ENCODE measurements at regions of chr11 and their contacts with region 1.

Region 1: DNA sequence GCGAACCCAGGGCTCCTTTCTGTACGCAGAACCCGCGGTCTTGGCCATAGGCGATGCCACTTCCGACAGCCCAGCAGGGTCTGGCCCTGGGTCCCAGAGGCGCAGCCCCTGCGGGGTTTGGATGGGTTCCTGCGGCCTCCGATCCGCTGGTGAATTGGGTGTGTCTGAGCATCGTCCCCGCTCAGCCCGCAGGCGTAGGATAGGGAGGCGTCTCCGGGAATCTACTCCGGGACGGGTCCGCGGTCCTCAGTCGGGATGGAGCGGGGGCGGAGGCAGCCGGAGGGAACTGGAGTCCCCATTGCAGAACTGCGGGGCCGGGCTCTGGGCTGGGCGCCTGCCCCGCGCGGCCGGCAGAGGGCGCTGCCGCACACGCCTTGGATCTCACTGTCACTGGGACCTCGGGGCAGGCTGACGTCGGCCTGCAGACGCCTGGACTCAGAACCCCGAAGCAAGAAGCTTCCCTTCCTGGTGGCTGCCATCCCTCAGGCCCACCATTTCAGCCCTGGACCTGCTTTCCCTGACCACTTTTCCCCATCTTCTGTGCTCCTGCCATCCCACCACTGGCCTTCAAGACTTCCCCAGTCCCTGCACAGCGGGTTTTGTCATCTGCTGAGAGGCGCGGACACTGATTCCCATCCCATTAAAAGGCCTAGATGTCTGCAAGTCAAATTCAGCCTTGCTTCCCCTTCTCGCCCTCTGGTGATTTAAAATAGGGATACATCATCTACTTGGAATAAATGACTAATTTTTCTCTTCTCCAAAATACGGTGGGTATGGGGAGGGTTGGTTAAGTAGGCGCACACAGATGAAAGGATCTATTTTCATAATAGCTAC is 38.3 kb upstream of the CREB3L1 start:
- DNase-seq: peak; percentile 84
- ATAC-seq: peak; percentile 66
- H3K4me3 Mint-ChIP-seq: peak overlapping the region; percentile 60
- H3K27ac Mint-ChIP-seq: no peak overlapping the region
- H3K4me1 Mint-ChIP-seq: peaks cover 37% of the 10 kb centered on the region
- H3K27me3 Mint-ChIP-seq: peaks cover 16% of the 10 kb centered on the region
- CTCF ChIP-seq: peak; percentile 96

Region 2: GRCh38 chr11:46256540-46257001 is 17.4 kb after region 1 on chr11:
- CTCF ChIA-PET with region 1: interaction called, 14 read pairs
- POLR2A ChIA-PET with region 1: no interaction called
- intact Hi-C with region 1: no loop called
- DNase-seq: no peak
- ATAC-seq: no peak
- H3K4me3 Mint-ChIP-seq: no peak overlapping the region
- H3K27ac Mint-ChIP-seq: no peak overlapping the region
- H3K4me1 Mint-ChIP-seq: no peaks in the 10 kb centered on the region
- H3K27me3 Mint-ChIP-seq: no peaks in the 10 kb centered on the region
- CTCF ChIP-seq: no peak

Region 3: GRCh38 chr11:46295312-46296058 is 56.3 kb after region 1 on chr11:
- CTCF ChIA-PET with region 1: interaction called, 73 read pairs
- POLR2A ChIA-PET with region 1: interaction called, 5 read pairs
- intact Hi-C with region 1: no loop called
- DNase-seq: peak; percentile 73
- ATAC-seq: peak; percentile 98
- H3K4me3 Mint-ChIP-seq: peak overlapping the region; percentile 72
- H3K27ac Mint-ChIP-seq: no peak overlapping the region
- H3K4me1 Mint-ChIP-seq: peaks cover 12% of the 10 kb centered on the region
- H3K27me3 Mint-ChIP-seq: peaks cover 8% of the 10 kb centered on the region
- CTCF ChIP-seq: peak; percentile 19

Region 4: DNA sequence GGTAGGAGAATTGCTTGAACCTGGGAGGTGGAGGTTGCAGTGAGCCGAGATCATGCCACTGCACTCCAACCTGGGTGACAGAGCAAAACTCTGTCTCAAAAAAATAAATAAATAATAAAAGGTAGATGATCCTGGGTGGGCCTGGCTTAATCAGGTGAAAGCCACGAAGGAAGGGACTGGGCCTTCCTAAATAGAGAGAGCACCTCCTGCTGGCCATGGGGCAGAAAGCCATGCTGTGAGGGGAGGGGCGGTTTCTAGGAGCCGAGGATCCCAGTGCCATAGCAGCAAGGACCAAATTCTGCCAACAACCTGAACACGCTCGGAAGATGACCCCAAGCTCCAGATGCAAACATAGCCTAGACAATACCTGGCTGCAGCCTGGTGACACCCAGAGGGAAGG is 83.6 kb after region 1 on chr11:
- CTCF ChIA-PET with region 1: interaction called, 382 read pairs
- POLR2A ChIA-PET with region 1: interaction called, 11 read pairs
- intact Hi-C with region 1: no loop called
- DNase-seq: peak; percentile 50
- ATAC-seq: peak; percentile 53
- H3K4me3 Mint-ChIP-seq: no peak overlapping the region
- H3K27ac Mint-ChIP-seq: no peak overlapping the region
- H3K4me1 Mint-ChIP-seq: peaks cover 11% of the 10 kb centered on the region
- H3K27me3 Mint-ChIP-seq: no peaks in the 10 kb centered on the region
- CTCF ChIP-seq: no peak

Region 5: GRCh38 chr11:46346886-46347636 is 107.9 kb after region 1 on chr11 and contains the start of gene DGKZ:
- CTCF ChIA-PET with region 1: interaction called, 25 read pairs
- POLR2A ChIA-PET with region 1: interaction called, 3 read pairs
- intact Hi-C with region 1: no loop called
- DNase-seq: peak; percentile 85
- ATAC-seq: peak; percentile 78
- H3K4me3 Mint-ChIP-seq: peak within 1 kb of the TSS; percentile 89
- H3K27ac Mint-ChIP-seq: peak within 1 kb of the TSS; percentile 94
- H3K4me1 Mint-ChIP-seq: peaks cover 71% of the 10 kb centered on the region
- H3K27me3 Mint-ChIP-seq: no peaks in the 10 kb centered on the region
- CTCF ChIP-seq: peak; percentile 72
- total RNA-seq, gene DGKZ: 94.4 to 94.9 TPM

Region 6: DNA sequence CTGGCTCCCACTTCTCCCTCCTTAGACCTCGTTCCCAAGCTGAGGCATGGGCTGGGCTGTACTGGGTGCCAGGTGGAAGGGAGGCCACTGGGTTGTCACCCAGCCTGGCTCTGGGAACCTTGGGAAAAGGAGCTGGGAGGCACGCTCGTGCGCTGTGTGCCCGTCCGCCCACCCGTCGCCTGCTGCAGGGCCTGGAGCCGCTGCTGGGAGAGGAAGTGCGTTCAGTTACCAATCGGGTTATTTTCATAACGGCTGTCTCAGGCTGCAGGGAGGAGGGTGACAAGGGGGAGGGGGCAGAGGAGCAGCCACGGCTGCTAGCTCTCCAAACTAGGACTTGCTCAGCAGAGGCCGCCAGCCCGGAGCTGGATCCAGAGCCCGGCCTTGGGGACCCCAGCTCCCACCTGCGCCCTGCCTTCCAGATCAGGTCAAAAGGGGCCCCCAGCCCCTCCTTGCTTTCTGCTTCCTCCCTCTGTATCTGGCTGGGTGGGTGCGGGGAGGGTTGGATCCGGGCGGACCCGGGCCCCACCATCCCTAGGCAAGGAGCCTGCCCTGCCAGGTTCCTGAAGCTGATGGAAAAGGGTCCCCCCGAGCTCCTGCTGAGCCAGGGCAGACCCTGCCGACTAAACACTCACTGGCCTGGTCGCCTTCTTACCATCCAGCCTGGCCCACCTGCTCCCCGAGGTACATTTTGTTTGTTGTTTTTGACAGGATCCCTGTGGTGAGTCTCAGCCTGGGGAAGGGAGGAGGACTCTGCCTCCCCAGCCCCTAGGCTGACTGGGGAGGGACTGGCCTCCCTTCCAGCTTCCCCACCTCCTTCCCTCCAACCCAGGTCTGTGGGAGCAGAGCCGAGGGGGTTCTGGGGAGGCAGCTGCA is 122.3 kb after region 1 on chr11:
- CTCF ChIA-PET with region 1: interaction called, 19 read pairs
- POLR2A ChIA-PET with region 1: interaction called, 3 read pairs
- intact Hi-C with region 1: no loop called
- DNase-seq: peak; percentile 85
- ATAC-seq: peak; percentile 94
- H3K4me3 Mint-ChIP-seq: peak overlapping the region; percentile 74
- H3K27ac Mint-ChIP-seq: peak overlapping the region; percentile 95
- H3K4me1 Mint-ChIP-seq: peaks cover 59% of the 10 kb centered on the region
- H3K27me3 Mint-ChIP-seq: no peaks in the 10 kb centered on the region
- CTCF ChIP-seq: no peak

Measured in activated CD8-positive, alpha-beta T cell treated with anti-CD3 and anti-CD28 coated beads for 36 hours (primary cell).